Dorsolateral prefrontal cortex (tissue), 120 donors: ENCODE measurements at regions of chr12 and their contacts with region 1.

Region 1: GRCh38 chr12:120904197-120904773 is at the start of gene SPPL3:
- DNase-seq: peak; percentile 78 to 96 (median 92)
- H3K4me3 ChIP-seq: peak within 1 kb of the TSS; percentile 66 to 97 (median 89)
- H3K27ac ChIP-seq: peak within 1 kb of the TSS; percentile 83 to 98 (median 94)
- H3K27me3 ChIP-seq: no peaks in the 10 kb centered on the region
- CTCF ChIP-seq: peak in 44 of 56 donors; percentile 9 to 58 (median 36)
- total RNA-seq, gene SPPL3: 50.6 to 111 (median 72.4) TPM

Region 2: GRCh38 chr12:120720234-120720986 is 183.9 kb before region 1 on chr12:
- intact Hi-C with region 1: loop called (anchors 5 to 10 kb)
- DNase-seq: peak in 3 of 10 donors; percentile 29 to 56 (median 43)
- H3K4me3 ChIP-seq: no peak overlapping the region
- H3K27ac ChIP-seq: peak overlapping the region in 55 of 59 donors; percentile 0 to 93 (median 67)
- H3K27me3 ChIP-seq: no peaks in the 10 kb centered on the region
- CTCF ChIP-seq: no peak

Region 3: GRCh38 chr12:120725659-120726509 is 178.4 kb before region 1 on chr12 and contains the start of gene ACADS:
- intact Hi-C with region 1: loop called (anchors 5 to 10 kb)
- DNase-seq: peak; percentile 66 to 89 (median 79)
- H3K4me3 ChIP-seq: peak within 1 kb of the TSS; percentile 59 to 88 (median 78)
- H3K27ac ChIP-seq: peak within 1 kb of the TSS in 57 of 59 donors; percentile 14 to 86 (median 71)
- H3K27me3 ChIP-seq: no peaks in the 10 kb centered on the region
- CTCF ChIP-seq: peak in 37 of 56 donors; percentile 8 to 62 (median 29)
- total RNA-seq, gene ACADS: 6.5 to 27.7 (median 14.2) TPM

Region 4: GRCh38 chr12:120761519-120761934 is 142.8 kb before region 1 on chr12:
- intact Hi-C with region 1: loop called in 1 of 2 experiments (anchors 5 kb)
- DNase-seq: peak in 1 of 10 donors; percentile 42
- H3K4me3 ChIP-seq: peak overlapping the region in 1 of 59 donors; percentile 4
- H3K27ac ChIP-seq: peak overlapping the region; percentile 27 to 87 (median 72)
- H3K27me3 ChIP-seq: no peaks in the 10 kb centered on the region
- CTCF ChIP-seq: no peak

Region 5: DNA sequence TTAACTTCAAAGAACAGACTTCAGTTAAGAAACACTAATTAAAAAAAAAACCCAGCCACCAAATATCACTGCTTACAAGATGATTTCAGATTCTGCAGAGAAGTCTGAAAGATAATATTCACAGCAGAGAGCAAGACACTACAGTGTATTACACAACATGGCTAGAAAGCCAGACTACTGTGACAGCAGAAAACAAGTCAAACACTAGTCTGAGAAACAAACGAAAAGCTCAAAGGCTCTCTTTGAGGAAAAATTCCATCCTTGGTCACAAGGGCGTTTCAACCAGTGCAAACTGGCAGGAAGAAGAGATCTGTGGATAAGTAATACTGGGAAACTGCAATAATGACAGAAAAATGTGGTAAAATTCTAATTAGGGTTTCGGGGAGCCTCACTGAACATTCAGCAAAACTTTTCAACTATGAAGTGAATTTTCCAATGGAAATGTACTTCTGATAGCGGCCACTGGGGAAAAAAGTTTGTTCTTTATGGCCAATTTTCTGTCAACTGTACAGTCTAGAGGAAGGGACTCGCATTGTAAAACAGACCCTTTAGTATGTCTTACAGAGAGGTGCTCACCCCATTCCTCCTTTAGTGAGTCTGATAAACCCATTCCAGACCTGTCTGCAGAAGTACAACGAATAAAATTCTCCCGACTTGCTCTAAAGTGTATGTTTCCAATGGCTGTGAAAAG is 128.3 kb before region 1 on chr12:
- intact Hi-C with region 1: no loop called
- DNase-seq: no peak
- H3K4me3 ChIP-seq: peak overlapping the region in 1 of 59 donors; percentile 4
- H3K27ac ChIP-seq: peak overlapping the region in 29 of 59 donors; percentile 0 to 73 (median 29)
- H3K27me3 ChIP-seq: no peaks in the 10 kb centered on the region
- CTCF ChIP-seq: peak in 35 of 56 donors; percentile 7 to 56 (median 28)

Region 6: DNA sequence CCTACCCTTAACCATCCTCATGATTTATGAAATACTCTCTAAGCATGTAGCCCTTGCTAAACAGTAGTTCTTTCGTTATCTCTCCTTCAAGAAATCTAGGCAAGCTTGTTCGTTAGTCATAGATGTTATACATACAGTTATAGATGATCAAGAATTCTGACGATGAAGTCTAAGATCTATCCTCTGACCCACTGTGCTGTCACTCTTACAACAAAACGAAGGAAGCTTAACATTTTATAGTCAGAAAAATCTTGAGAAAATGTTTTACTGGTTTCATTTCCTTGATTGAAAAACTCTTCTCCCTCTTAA is 69.0 kb before region 1 on chr12:
- intact Hi-C with region 1: loop called in 1 of 2 experiments (anchors 5 kb)
- DNase-seq: no peak
- H3K4me3 ChIP-seq: peak overlapping the region in 13 of 59 donors; percentile 0 to 31 (median 11)
- H3K27ac ChIP-seq: peak overlapping the region in 58 of 59 donors; percentile 27 to 92 (median 78)
- H3K27me3 ChIP-seq: no peaks in the 10 kb centered on the region
- CTCF ChIP-seq: no peak

Region 7: GRCh38 chr12:120886199-120887018 is 17.9 kb before region 1 on chr12:
- intact Hi-C with region 1: no loop called
- DNase-seq: no peak
- H3K4me3 ChIP-seq: no peak overlapping the region
- H3K27ac ChIP-seq: peak overlapping the region in 1 of 59 donors; percentile 13
- H3K27me3 ChIP-seq: no peaks in the 10 kb centered on the region
- CTCF ChIP-seq: no peak